RWPE1 (cell line): ENCODE measurements at regions of chr3 and their contacts with region 1.

Region 1: DNA sequence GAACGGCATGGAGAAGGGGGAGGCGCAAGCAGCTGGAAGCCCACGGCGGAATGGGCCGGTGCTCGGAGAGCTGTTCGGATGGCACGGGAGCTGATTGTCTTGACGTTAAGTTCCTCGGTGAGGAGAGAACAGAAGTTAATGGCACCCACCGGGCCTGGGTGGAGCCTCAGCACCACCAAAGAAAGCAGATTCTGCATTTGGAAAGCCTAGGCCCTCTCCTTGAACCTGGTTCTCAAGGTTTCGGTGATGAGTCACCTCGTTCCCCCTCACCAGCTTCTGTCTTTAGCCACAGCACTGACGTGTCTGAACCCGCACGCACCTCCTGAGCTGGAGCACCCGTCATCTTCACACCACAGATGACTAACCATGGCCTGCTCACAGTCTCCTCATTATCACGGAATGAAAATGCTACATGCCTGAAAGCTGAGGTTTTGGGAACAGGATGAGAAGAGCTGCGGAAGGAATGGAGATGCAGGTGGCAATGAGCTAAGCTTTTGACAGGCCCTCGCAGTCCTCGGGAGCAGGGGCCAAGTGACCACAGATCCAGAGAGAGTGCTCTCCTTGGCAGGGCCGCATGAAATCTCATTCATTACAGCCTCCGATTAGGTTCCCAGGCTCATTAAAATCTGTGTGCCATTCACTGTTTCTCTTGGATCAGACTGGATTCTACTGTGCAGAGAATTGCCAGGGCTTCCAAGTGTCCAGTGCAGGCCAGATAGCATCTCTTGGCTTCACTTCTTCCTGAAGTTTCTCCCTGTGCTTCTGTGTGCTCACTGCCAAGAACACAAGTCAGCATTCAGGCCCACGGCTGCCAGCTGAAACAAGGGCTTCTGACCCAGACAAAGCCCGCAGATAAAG is 96.3 kb upstream of the DLG1 start:
- DNase-seq: peak; percentile 99
- H3K27ac ChIP-seq: peak overlapping the region; percentile 97
- CTCF ChIP-seq: no peak

Region 2: DNA sequence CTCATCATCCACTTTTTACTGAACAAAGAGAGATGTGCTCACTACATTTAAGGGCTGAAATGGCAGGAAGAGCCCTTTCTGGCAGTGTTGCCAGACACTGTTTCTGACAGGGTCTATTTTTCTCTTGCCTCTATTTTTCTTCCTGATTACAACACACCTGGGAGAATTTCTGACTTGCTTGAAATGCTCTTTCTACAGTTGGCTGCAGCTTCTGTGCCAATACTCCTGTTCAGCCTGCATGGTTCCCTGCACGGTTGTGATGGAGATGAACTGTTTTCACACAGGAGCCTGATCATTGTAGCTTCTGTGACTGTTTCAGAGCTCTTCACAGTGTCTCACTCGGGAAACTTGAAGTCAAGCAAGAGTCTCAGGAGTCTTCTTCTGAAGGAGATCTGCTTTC is 13.3 kb before region 1 on chr3:
- CTCF ChIA-PET with region 1: no interaction called
- POLR2A ChIA-PET with region 1: interaction called, 12 read pairs
- DNase-seq: no peak
- H3K27ac ChIP-seq: no peak overlapping the region
- CTCF ChIP-seq: no peak

Region 3: DNA sequence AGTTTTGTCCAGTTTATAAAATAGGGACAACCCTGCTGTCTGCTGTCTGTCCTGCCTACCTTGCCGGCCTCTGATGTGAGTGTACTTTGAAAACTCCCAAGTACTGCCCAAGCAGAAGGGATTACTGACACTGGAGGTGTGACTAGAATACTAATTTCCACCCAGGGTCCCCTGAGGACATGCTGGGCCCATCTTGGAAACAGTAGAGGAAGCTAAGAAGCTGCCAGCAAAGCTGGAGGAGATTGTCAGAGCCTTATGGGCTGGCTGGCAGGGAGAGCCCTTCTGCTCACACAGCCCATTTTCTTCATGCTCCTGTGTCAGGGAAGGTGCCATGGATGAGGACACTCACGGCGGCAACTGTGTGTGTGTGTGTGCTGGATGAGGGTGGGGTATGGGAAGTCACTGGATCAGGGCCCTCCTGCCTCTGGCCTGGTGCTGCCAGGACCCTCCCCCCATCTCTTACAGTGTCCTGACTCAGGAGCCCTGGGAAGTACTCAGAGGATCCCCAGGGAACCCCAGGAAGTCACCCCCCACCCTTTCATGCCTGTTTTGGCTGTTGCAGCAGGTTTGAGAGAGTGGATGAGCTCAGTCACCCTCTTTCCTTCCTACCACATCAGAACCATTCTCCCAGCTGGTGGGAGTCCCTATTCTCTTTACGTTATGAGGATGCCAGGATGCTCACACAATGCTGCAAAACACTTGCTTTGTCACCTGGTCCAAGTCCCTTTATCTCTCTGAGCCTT is 101.9 kb after region 1 on chr3:
- CTCF ChIA-PET with region 1: no interaction called
- POLR2A ChIA-PET with region 1: interaction called, 11 read pairs
- DNase-seq: no peak
- H3K27ac ChIP-seq: peak overlapping the region; percentile 88
- CTCF ChIP-seq: no peak